ENCODE measurements at regions of chr1 and their contacts with region 1.

Region 1: GRCh38 chr1:154801234-154802011 is 68.7 kb downstream of the KCNN3 start:
- DNase-seq: no peak
- H3K4me3 ChIP-seq: no peak overlapping the region
- H3K27ac ChIP-seq: no peak overlapping the region
- H3K4me1 ChIP-seq: no peaks in the 10 kb centered on the region
- H3K27me3 ChIP-seq: peaks cover 94% of the 10 kb centered on the region
- CTCF ChIP-seq: no peak

Region 2: GRCh38 chr1:154595621-154596020 is 205.8 kb before region 1 on chr1:
- CTCF ChIA-PET with region 1: no interaction called
- POLR2A ChIA-PET with region 1: no interaction called
- intact Hi-C with region 1: no loop called
- DNase-seq: no peak
- H3K4me3 ChIP-seq: no peak overlapping the region
- H3K27ac ChIP-seq: no peak overlapping the region
- H3K4me1 ChIP-seq: no peaks in the 10 kb centered on the region
- H3K27me3 ChIP-seq: no peaks in the 10 kb centered on the region
- CTCF ChIP-seq: no peak

Region 3: DNA sequence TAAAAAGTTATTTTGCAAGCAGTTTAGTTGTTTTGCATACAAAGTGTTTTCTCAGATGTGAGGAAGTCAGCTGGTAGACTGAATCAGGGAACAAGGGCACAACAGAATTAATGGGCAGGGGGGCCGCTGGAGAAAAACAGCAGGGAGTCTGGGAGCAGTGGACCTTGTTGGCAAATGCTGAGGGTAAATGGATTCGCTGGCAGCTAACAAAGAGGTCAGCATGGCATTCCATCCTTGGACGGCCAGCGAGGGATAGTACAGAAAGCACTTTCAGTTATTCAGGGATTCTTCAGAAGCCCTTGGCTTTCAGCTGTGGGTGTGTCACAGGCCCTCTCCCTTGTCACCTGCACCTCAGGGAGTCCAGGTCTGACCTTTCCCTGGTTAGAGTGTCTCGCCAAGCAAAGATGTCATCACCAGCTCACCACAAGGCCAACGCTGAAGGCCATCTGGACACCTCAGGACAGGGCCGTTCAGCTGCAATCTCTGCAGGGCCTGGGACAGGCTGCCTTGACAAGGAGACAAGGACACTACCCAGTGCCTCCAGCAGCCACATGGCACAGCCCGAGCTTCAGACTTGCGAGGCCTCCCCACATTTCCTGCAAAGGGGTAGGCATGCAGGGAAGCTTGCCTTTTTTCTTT is 21.8 kb before region 1 on chr1:
- CTCF ChIA-PET with region 1: interaction called, 14 read pairs
- POLR2A ChIA-PET with region 1: no interaction called
- intact Hi-C with region 1: no loop called
- DNase-seq: no peak
- H3K4me3 ChIP-seq: no peak overlapping the region
- H3K27ac ChIP-seq: no peak overlapping the region
- H3K4me1 ChIP-seq: no peaks in the 10 kb centered on the region
- H3K27me3 ChIP-seq: peaks cover 77% of the 10 kb centered on the region
- CTCF ChIP-seq: no peak